IMR-90 (cell line): ENCODE measurements at regions of chr14 and their contacts with region 1.

Region 1: DNA sequence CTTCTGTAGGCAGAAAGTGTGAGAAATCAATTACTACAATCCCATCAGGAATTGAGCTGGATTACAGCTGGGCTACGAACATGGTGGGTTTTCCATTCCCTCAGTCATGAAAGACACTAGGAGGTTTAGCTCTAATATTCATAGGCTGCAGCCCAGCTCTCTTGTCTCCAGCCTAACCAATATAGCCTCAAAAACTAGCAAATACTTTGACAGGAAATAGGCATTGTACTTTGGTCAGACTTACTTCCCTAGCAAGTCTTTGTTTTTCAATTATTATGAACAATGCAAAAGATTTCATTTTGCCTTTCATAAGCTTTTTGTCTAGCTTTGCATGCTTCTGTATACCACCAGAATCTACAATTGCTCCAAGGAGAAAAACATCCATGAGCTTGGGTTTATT is 296.2 kb downstream of the GPHN start:
- DNase-seq: no peak
- ATAC-seq: no peak
- H3K4me3 ChIP-seq: no peak overlapping the region
- H3K27ac ChIP-seq: no peak overlapping the region
- H3K4me1 ChIP-seq: no peaks in the 10 kb centered on the region
- H3K27me3 ChIP-seq: no peaks in the 10 kb centered on the region
- CTCF ChIP-seq: no peak
- POLR2A ChIP-seq: no peak
- RAD21 ChIP-seq: no peak

Region 2: GRCh38 chr14:66850258-66850888 is 46.2 kb after region 1 on chr14:
- CTCF ChIA-PET with region 1: interaction called, 11 read pairs
- POLR2A ChIA-PET with region 1: no interaction called
- dilution Hi-C with region 1: no loop called
- in situ Hi-C with region 1: no loop called
- intact Hi-C with region 1: no loop called
- DNase-seq: no peak
- ATAC-seq: no peak
- H3K4me3 ChIP-seq: no peak overlapping the region
- H3K27ac ChIP-seq: no peak overlapping the region
- H3K4me1 ChIP-seq: no peaks in the 10 kb centered on the region
- H3K27me3 ChIP-seq: no peaks in the 10 kb centered on the region
- CTCF ChIP-seq: no peak
- POLR2A ChIP-seq: no peak
- RAD21 ChIP-seq: no peak